ENCODE measurements at regions of chr3 and their contacts with region 1.

Region 1: DNA sequence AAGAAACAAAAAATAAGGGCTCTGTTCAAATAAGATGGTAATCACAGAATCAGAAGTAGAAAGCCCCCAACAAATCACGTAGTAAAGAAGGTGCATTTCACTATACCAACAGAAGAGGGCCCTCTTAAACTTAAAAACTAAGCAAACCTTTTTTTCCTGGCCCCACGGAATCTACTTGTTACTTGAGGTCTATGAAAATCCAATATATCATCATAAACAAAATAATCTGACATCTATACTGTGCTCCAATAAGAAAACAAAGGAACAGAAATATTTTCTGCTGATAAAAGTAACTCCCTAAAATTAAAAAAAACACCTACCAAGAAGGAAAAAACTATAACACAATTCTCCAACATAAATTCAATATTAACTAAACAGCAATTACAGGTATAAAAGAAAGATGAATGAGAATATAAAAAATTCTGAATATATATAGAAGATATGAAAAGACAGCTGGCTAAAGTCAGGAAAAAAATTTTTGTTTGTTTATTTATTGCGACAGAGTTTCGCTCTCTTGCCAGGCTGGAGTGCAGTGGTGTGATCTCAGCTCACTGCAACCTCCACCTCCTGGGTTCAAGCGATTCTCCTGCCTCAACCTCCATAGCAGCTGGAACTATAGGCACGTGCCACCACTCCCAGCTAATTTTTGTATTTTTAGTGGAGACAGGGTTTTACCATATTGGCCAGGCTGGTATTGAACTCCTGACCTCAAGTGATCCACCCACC is 81.8 kb downstream of the CLASP2 start:
- ATAC-seq: peak in 1 of 8 experiments; percentile 16
- H3K4me3 ChIP-seq: no peak overlapping the region
- H3K27ac ChIP-seq: no peak overlapping the region
- H3K4me1 ChIP-seq: peaks cover 0 to 9% of the 10 kb centered on the region in 2 donors

Region 2: GRCh38 chr3:33482111-33482521 is 154.2 kb before region 1 on chr3:
- in situ Hi-C with region 1: no loop called
- ATAC-seq: peak in 1 of 8 experiments; percentile 20
- H3K4me3 ChIP-seq: no peak overlapping the region
- H3K27ac ChIP-seq: no peak overlapping the region
- H3K4me1 ChIP-seq: no peaks in the 10 kb centered on the region

Region 3: DNA sequence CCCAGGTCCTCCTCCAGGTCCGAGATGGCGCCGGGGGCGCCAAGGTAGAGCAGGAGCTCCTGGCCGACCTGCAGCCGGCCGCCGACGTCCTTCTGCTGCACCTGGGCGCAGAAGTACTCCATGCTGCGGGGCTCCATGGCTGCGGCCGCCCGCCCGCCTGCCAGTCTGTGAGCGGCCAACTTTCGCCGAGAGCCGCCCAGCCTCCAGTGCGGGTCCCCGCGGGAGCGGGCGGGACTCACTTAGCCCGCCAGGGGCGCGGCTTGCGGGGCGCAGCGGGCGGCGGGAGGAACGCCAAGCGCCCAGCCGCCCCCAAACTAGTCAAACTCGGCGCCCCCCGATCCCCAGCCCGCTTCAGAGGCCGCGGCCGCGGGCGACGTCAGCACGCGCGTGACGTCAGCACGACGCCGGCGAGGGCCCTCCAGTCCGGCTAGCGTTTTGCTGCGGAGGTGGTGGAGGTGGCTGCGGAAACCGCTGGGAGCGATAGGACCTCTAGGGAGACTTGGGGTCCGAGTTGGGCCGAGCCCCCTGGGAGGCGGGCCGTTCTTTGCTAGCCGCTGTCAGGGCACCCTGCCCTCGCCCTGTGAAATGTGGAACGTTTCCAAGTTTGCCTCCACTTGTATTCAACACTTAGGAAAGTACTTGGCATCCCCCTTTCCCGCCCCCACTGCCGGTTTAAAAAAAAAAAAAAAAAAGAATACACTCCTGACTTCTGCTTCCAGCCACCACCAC is 81.7 kb after region 1 on chr3 and contains the start of gene CLASP2:
- in situ Hi-C with region 1: loop called in 1 of 9 experiments (anchors 10 kb)
- ATAC-seq: peak; percentile 86 to 97 (median 95)
- H3K4me3 ChIP-seq: peak within 1 kb of the TSS; percentile 66 to 98 (median 81)
- H3K27ac ChIP-seq: peak within 1 kb of the TSS; percentile 59 to 81
- H3K4me1 ChIP-seq: peaks cover 3 to 9% of the 10 kb centered on the region in 2 donors
- total RNA-seq, gene CLASP2: 27.5 to 317 (median 199) TPM

Region 4: DNA sequence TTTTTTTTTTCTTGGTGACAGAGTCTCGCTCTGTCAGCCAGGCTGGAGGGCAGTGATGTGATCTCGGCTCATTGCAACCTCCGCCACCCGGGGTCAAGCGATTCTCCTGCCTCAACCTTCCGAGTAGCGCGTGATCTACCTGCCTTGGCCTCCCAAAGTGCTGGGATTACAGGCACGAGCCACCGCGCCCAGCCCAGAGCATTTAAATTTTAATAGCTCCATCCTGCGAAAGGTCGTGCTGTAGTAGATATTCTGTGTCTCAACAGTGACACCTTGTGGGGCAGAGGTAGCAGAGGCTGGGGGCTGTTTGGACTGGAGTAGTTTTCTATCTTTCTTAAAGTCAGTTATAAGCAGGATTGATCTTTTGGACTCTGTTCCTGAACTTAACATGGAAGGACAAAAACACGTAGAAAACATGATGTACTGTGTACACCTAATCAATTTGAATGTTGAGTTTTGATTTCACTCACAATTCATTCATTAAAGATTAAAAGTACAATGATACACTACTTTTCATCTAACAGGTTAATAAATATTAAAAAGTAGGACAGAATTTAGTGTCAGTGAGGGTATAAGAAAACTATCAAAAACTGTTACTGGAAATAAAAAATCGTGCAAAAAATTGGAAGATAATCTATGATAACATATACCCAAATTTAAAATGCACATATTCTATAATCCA is 151.2 kb after region 1 on chr3:
- in situ Hi-C with region 1: loop called in 4 of 9 experiments (anchors 10 to 25 kb)
- ATAC-seq: peak; percentile 87 to 97 (median 92)
- H3K4me3 ChIP-seq: peak overlapping the region; percentile 5 to 33 (median 21)
- H3K27ac ChIP-seq: no peak overlapping the region
- H3K4me1 ChIP-seq: no peaks in the 10 kb centered on the region

Region 5: GRCh38 chr3:34067536-34068051 is 431.3 kb after region 1 on chr3:
- in situ Hi-C with region 1: no loop called
- ATAC-seq: peak in 5 of 8 experiments; percentile 61 to 96 (median 79)
- H3K4me3 ChIP-seq: no peak overlapping the region
- H3K27ac ChIP-seq: no peak overlapping the region
- H3K4me1 ChIP-seq: peaks cover 19 to 21% of the 10 kb centered on the region in 2 donors

Measured in motor neuron (in vitro differentiated cells).